ENCODE measurements at regions of chr5 and their contacts with region 1.

Region 1: DNA sequence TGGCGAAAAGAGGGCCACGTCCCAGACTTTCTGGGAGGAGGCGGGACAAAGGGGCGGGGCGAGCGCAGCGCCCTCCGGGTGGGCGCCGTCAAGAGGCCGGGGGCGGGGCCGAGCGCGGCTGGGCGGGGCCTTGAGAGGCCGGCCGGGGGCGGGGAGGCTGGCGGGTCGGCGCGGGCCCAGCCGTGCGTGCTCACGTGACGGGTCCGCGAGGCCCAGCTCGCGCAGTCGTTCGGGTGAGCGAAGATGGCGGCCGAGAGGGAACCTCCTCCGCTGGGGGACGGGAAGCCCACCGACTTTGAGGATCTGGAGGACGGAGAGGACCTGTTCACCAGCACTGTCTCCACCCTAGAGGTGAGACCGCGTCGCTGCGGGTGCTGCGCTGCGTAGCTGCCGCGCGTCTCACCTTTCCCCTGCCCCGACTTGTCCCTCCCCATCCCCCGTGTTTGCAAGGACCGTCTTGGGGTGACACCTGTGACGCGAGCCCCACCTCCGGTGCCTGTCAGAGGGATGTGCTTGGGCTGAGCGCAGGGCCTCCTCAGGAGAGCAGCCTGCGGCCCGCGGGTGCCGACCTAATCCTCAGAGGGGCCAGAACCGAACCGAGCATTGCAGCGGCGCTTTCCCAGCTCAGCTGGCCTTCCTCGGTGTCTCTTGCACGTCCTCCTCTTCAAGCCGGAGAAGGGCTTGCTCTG is at the start of gene SNX2:
- DNase-seq: peak; percentile 96
- ATAC-seq: peak; percentile 86
- H3K4me3 Mint-ChIP-seq: peak within 1 kb of the TSS; percentile 97
- H3K27ac Mint-ChIP-seq: peak within 1 kb of the TSS; percentile 96
- H3K4me1 Mint-ChIP-seq: peaks cover 39% of the 10 kb centered on the region
- H3K27me3 Mint-ChIP-seq: no peaks in the 10 kb centered on the region
- CTCF ChIP-seq: no peak
- total RNA-seq, gene SNX2: 145 and 146 TPM in 2 replicates

Region 2: DNA sequence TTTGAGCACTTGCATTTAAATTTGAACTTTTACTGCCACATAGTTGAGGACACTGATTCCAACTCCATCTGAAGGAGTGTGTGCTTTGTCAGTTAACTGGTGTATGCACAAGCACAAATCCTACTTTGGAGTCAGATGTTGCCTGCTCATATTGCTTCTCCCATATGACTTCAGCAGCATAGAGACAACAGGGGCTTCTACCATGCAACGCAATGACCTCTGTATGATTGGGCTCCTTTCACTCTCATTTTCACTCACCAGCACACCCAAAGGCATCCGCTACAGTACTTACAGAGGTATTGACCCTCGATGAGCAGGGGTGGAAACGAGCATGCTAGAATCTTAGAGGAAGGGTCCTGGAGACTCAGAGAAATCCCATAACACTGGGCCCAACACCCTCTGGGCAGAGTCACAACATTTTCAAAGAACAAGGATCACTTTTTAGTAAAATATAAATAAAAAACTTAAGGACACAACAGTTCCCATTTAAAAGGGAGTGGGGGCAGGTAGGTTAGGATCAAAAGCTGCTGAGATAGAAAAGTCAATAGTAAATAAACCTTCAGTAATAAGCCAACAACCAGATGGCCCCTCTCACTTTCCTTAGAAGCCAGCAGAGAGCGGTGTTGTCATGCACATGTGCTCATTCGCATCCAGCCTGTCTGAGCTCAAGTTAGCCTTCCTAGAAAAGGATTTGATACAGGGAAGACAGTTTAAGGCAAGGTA is 259.1 kb before region 1 on chr5:
- CTCF ChIA-PET with region 1: interaction called, 3 read pairs
- POLR2A ChIA-PET with region 1: no interaction called
- intact Hi-C with region 1: loop called (anchors 1 kb)
- DNase-seq: peak; percentile 17
- ATAC-seq: peak; percentile 79
- H3K4me3 Mint-ChIP-seq: no peak overlapping the region
- H3K27ac Mint-ChIP-seq: no peak overlapping the region
- H3K4me1 Mint-ChIP-seq: peaks cover 8% of the 10 kb centered on the region
- H3K27me3 Mint-ChIP-seq: peaks cover 2% of the 10 kb centered on the region
- CTCF ChIP-seq: no peak

Region 3: DNA sequence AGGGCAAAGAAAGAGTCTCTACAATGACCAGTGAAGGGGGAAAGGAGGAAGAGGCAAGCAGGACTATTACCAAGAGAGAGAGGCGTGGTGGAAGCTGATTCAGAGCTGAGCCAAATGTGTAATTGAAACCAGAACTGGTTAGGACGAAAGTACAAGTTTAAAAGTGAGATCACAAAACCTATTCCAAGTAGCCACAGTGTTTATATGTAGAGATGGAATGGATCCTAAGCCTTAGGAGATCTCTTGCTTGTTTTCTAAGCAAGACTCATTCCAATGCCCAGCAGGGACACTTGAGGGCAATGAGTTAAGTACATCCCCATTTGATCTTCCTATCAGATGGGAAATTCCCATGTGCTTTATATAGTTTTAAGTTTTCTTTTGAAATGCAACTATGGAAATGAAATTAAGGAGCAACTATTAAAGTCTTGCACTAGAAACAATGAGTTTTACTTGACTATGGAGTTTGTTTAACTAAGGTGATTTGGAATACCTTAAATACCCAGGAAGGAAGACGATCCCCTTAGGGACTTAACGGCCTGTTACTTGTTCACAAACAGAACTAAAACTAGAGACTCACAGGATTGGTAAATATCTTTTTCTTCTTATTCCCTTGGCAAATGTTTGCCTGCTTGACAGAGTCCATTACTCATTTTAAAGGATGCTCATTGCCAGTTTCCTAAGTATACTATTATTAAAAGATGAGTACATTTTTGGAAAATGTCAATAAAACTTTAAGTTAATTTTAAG is 51.2 kb before region 1 on chr5:
- CTCF ChIA-PET with region 1: interaction called, 3 read pairs
- POLR2A ChIA-PET with region 1: interaction called, 5 read pairs
- intact Hi-C with region 1: loop called (anchors 1 kb)
- DNase-seq: no peak
- ATAC-seq: peak; percentile 89
- H3K4me3 Mint-ChIP-seq: peak overlapping the region; percentile 74
- H3K27ac Mint-ChIP-seq: peak overlapping the region; percentile 91
- H3K4me1 Mint-ChIP-seq: peaks cover 57% of the 10 kb centered on the region
- H3K27me3 Mint-ChIP-seq: no peaks in the 10 kb centered on the region
- CTCF ChIP-seq: no peak

Region 4: GRCh38 chr5:122756263-122756911 is 18.6 kb before region 1 on chr5:
- CTCF ChIA-PET with region 1: interaction called, 3 read pairs
- POLR2A ChIA-PET with region 1: interaction called, 19 read pairs
- intact Hi-C with region 1: loop called (anchors 1 kb)
- DNase-seq: no peak
- ATAC-seq: peak; percentile 86
- H3K4me3 Mint-ChIP-seq: peak overlapping the region; percentile 1
- H3K27ac Mint-ChIP-seq: peak overlapping the region; percentile 72
- H3K4me1 Mint-ChIP-seq: peaks cover 28% of the 10 kb centered on the region
- H3K27me3 Mint-ChIP-seq: no peaks in the 10 kb centered on the region
- CTCF ChIP-seq: no peak

Region 5: GRCh38 chr5:122805481-122805880 is 30.5 kb after region 1 on chr5:
- CTCF ChIA-PET with region 1: no interaction called
- POLR2A ChIA-PET with region 1: interaction called, 10 read pairs
- intact Hi-C with region 1: no loop called
- DNase-seq: no peak
- ATAC-seq: no peak
- H3K4me3 Mint-ChIP-seq: no peak overlapping the region
- H3K27ac Mint-ChIP-seq: no peak overlapping the region
- H3K4me1 Mint-ChIP-seq: peaks cover 5% of the 10 kb centered on the region
- H3K27me3 Mint-ChIP-seq: no peaks in the 10 kb centered on the region
- CTCF ChIP-seq: no peak